ENCODE measurements at regions of chr3 and their contacts with region 1.

Region 1: GRCh38 chr3:46998121-46998851 is 18.8 kb downstream of the NBEAL2 start:
- DNase-seq: peak; percentile 72
- ATAC-seq: peak; percentile 90
- H3K4me3 Mint-ChIP-seq: no peak overlapping the region
- H3K27ac Mint-ChIP-seq: no peak overlapping the region
- H3K4me1 Mint-ChIP-seq: peaks cover 10% of the 10 kb centered on the region
- H3K27me3 Mint-ChIP-seq: no peaks in the 10 kb centered on the region
- CTCF ChIP-seq: peak; percentile 24

Region 2: GRCh38 chr3:46663591-46664135 is 334.6 kb before region 1 on chr3:
- CTCF ChIA-PET with region 1: no interaction called
- POLR2A ChIA-PET with region 1: no interaction called
- intact Hi-C with region 1: no loop called
- DNase-seq: no peak
- ATAC-seq: no peak
- H3K4me3 Mint-ChIP-seq: no peak overlapping the region
- H3K27ac Mint-ChIP-seq: no peak overlapping the region
- H3K4me1 Mint-ChIP-seq: peaks cover 8% of the 10 kb centered on the region
- H3K27me3 Mint-ChIP-seq: peaks cover 16% of the 10 kb centered on the region
- CTCF ChIP-seq: no peak

Region 3: GRCh38 chr3:46705022-46705530 is 293.2 kb before region 1 on chr3:
- CTCF ChIA-PET with region 1: no interaction called
- POLR2A ChIA-PET with region 1: no interaction called
- intact Hi-C with region 1: loop called (anchors 1 kb)
- DNase-seq: peak; percentile 54
- ATAC-seq: peak; percentile 87
- H3K4me3 Mint-ChIP-seq: no peak overlapping the region
- H3K27ac Mint-ChIP-seq: no peak overlapping the region
- H3K4me1 Mint-ChIP-seq: no peaks in the 10 kb centered on the region
- H3K27me3 Mint-ChIP-seq: peaks cover 15% of the 10 kb centered on the region
- CTCF ChIP-seq: peak; percentile 78

Region 4: DNA sequence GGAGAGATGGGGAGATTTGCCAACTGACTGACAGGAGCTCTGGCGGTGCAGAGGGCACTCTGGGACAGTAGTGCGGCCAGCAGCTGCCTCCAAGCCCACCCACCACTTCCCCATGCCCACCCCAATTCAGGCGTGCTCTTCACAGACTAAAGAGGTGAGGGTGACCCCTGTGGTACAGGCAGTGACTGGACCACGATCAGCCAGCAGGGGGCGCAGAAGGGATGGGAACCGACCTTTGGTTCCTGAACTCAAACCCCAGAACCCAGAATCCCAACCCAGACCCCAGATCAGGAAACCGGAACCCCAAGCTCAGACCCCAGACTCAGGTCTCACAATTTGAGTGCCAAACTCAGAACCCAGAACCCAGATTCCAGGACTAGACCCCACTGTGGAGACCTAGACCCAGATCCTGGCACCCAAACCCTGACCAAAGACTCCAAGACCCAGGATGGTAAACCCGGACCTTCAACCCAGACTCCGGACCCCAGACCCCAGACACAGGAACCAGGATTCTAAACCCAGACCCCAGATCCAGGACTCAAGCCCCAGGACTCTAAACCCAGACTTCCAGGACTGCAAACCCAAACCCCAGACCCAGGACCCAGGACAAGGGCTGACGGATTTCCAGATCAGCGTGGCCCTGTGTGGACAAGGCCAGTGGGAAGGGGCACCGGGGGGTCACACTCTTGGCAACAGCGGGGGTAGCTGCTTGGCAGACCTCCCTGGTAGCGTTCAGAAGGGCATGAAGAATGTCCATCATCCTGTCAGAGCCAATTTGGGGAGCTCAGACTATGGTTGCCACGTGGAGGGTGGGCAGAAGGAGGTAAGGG is 131.4 kb before region 1 on chr3:
- CTCF ChIA-PET with region 1: interaction called, 4 read pairs
- POLR2A ChIA-PET with region 1: no interaction called
- intact Hi-C with region 1: loop called (anchors 1 kb)
- DNase-seq: peak; percentile 75
- ATAC-seq: peak; percentile 76
- H3K4me3 Mint-ChIP-seq: no peak overlapping the region
- H3K27ac Mint-ChIP-seq: no peak overlapping the region
- H3K4me1 Mint-ChIP-seq: no peaks in the 10 kb centered on the region
- H3K27me3 Mint-ChIP-seq: peaks cover 7% of the 10 kb centered on the region
- CTCF ChIP-seq: peak; percentile 33

Region 5: DNA sequence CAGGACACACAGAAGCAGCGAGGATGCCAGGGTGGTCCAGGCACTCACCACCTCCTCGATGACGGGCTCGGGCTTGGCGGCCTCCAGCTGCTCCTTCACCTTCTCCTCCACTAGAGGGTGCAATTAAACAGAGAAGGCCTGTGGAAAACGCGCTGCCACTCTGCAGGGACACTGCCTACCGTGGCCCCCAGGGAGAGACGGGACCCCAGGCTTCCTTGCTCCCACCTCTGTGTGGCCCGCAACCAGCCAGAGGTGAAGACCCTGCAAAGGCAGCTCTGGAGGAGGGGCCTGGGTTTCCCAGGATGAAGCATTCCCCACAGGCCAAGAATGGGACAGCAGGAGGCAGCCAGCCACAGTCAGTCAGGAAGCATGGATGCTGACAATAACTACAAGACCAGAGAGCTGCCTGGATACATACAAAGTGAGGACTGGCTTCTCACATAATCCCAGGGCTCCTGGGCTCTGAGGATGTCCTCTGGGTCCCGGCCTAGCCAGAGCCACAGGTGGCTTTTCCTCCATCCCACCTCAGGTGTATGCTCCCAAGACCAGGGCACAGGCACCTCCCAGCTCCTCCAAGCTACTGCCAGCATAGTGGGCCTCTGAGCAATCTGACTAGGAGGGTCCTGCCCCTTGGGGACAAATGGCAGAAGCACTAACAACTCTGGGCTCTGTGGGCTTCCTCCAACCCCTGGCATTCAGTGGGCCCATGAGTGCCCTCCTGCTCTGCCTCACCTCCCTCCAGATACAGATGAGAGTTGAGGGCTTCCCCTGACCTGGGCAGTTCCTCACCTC is 74.5 kb before region 1 on chr3:
- CTCF ChIA-PET with region 1: interaction called, 35 read pairs
- POLR2A ChIA-PET with region 1: interaction called, 3 read pairs
- intact Hi-C with region 1: loop called (anchors 1 kb)
- DNase-seq: no peak
- ATAC-seq: no peak
- H3K4me3 Mint-ChIP-seq: peak overlapping the region; percentile 19
- H3K27ac Mint-ChIP-seq: peak overlapping the region; percentile 68
- H3K4me1 Mint-ChIP-seq: peaks cover 59% of the 10 kb centered on the region
- H3K27me3 Mint-ChIP-seq: no peaks in the 10 kb centered on the region
- CTCF ChIP-seq: no peak

Region 6: GRCh38 chr3:46966811-46967210 is 31.5 kb before region 1 on chr3:
- CTCF ChIA-PET with region 1: no interaction called
- POLR2A ChIA-PET with region 1: no interaction called
- intact Hi-C with region 1: loop called (anchors 1 kb)
- DNase-seq: no peak
- ATAC-seq: no peak
- H3K4me3 Mint-ChIP-seq: peak overlapping the region; percentile 62
- H3K27ac Mint-ChIP-seq: peak overlapping the region; percentile 74
- H3K4me1 Mint-ChIP-seq: peaks cover 82% of the 10 kb centered on the region
- H3K27me3 Mint-ChIP-seq: no peaks in the 10 kb centered on the region
- CTCF ChIP-seq: no peak

Region 7: GRCh38 chr3:47057212-47057671 is 59.0 kb after region 1 on chr3:
- CTCF ChIA-PET with region 1: no interaction called
- POLR2A ChIA-PET with region 1: no interaction called
- intact Hi-C with region 1: no loop called
- DNase-seq: no peak
- ATAC-seq: no peak
- H3K4me3 Mint-ChIP-seq: no peak overlapping the region
- H3K27ac Mint-ChIP-seq: no peak overlapping the region
- H3K4me1 Mint-ChIP-seq: peaks cover 4% of the 10 kb centered on the region
- H3K27me3 Mint-ChIP-seq: no peaks in the 10 kb centered on the region
- CTCF ChIP-seq: no peak

Region 8: GRCh38 chr3:47578119-47578632 is 579.9 kb after region 1 on chr3:
- CTCF ChIA-PET with region 1: no interaction called
- POLR2A ChIA-PET with region 1: no interaction called
- intact Hi-C with region 1: no loop called
- DNase-seq: peak; percentile 51
- ATAC-seq: peak; percentile 83
- H3K4me3 Mint-ChIP-seq: peak overlapping the region; percentile 73
- H3K27ac Mint-ChIP-seq: no peak overlapping the region
- H3K4me1 Mint-ChIP-seq: peaks cover 2% of the 10 kb centered on the region
- H3K27me3 Mint-ChIP-seq: peaks cover 24% of the 10 kb centered on the region
- CTCF ChIP-seq: no peak

Measured in activated B cell treated with CpG ODN at 0.5 μM for 24 hours (primary cell).